ENCODE measurements at regions of chr5 and their contacts with region 1.

Region 1: DNA sequence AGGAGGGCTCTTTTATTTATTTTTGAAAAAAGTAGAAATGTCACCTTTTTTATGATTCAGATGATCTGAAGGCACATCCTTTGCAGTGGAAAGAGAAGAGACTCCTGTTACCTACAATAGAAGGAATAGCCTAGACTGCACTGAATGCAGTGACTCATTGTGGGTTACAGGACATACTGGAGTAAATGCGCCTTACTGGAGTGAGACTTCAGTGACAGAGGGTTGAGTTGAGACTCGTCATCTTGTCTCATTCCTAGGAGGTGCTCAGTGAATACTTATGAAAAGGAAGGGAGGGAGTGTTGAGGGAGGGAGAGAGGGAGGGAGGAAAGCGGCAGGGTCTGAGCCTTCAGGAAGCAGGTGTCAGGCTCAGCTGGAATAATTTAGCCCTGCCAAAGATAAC is 25.2 kb downstream of the ANKRA2 start:
- DNase-seq: no peak
- H3K4me3 ChIP-seq: no peak overlapping the region
- H3K27ac ChIP-seq: no peak overlapping the region
- H3K4me1 ChIP-seq: peaks cover 6% of the 10 kb centered on the region
- H3K27me3 ChIP-seq: peaks cover 21% of the 10 kb centered on the region
- CTCF ChIP-seq: no peak

Region 2: DNA sequence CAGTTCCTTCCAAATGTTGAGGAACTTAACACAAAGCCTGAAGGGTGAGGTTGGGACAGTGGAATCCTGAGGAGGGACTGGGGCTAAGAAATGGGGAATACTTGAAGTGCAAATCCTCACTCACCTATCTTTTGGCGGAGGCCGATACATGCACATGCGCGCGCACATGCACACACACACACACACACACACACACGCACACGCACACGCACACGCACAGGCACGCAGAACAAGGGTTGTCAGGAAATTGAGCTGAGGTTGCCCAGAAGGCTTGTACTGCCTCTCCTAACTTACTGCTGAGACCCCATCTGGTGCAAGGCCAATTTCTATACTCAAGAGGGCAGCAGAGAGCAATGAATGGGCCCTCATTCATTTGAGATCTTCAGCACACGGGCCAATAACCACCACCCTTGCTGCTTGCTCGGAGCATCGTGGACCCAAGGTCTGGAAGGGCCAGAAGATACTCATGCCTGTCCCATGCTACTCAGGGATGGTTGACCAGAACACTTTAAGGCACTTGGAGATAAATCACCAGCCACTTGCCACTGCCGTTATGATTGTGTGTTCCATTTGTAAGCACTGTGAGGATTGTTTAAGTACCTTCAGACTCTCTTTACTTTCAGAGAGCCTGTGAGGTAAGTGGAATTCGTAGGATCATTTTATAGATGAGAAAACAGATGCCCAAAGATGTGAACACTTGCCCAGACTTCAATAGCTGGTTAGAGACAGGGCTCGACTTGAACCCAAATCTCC is 20.5 kb before region 1 on chr5:
- intact Hi-C with region 1: loop called (anchors 2 kb)
- DNase-seq: no peak
- H3K4me3 ChIP-seq: no peak overlapping the region
- H3K27ac ChIP-seq: no peak overlapping the region
- H3K4me1 ChIP-seq: no peaks in the 10 kb centered on the region
- H3K27me3 ChIP-seq: no peaks in the 10 kb centered on the region
- CTCF ChIP-seq: peak; percentile 68